Sigmoid colon (tissue), 7 donors: ENCODE measurements at regions of chr3 and their contacts with region 1.

Region 1: DNA sequence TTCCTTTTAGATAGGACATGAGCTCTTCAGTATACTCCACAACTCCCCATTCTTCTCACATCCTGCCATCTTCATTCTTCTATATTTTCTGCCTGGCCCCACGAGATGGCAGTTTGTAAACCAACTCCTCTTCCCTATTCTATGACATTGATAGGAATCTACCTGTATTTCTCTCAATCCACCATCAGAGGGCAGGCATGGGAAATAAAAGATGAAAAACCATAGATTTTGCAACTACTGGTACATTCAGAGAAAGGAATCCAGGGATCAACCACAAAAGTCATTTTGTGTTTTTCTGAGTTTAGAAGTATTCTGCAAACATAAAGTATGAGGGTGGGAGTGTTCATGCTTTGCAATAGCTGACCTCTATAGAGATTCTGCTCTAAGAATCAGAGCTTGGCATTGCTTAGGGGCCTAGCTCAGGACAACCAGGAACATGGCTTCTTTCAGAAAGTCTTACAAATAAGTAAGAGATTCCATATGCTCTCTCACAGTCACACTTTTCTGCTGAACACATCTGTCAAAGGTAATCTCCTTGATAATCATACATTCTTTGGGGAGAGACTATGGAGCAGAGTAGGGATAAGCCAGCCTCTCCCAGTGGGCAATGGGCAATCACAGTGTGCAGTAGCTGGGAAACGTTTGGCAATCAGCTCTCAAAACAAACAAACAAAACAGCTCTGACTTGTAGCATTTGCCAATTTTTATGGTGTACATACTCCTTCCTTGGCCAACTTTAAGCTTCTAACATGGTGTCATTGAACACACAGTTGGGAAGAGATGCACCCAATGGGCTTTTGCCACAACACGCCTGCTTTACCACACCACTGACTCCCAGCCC is 43.1 kb upstream of the SLC25A36 start:
- DNase-seq: no peak
- H3K4me3 ChIP-seq: no peak overlapping the region
- H3K27ac ChIP-seq: no peak overlapping the region
- H3K4me1 ChIP-seq: no peaks in the 10 kb centered on the region
- H3K27me3 ChIP-seq: no peaks in the 10 kb centered on the region
- CTCF ChIP-seq: peak in 3 of 4 experiments; percentile 37 to 51 (median 44)
- EP300 ChIP-seq: no peak
- POLR2A ChIP-seq: no peak

Region 2: GRCh38 chr3:141105828-141106628 is 207.5 kb after region 1 on chr3:
- intact Hi-C with region 1: loop called (anchors 2 kb)
- DNase-seq: peak; percentile 88
- H3K4me3 ChIP-seq: no peak overlapping the region
- H3K27ac ChIP-seq: no peak overlapping the region
- H3K4me1 ChIP-seq: no peaks in the 10 kb centered on the region
- H3K27me3 ChIP-seq: no peaks in the 10 kb centered on the region
- CTCF ChIP-seq: peak; percentile 38 to 72 (median 67)
- EP300 ChIP-seq: no peak
- POLR2A ChIP-seq: no peak

Region 3: DNA sequence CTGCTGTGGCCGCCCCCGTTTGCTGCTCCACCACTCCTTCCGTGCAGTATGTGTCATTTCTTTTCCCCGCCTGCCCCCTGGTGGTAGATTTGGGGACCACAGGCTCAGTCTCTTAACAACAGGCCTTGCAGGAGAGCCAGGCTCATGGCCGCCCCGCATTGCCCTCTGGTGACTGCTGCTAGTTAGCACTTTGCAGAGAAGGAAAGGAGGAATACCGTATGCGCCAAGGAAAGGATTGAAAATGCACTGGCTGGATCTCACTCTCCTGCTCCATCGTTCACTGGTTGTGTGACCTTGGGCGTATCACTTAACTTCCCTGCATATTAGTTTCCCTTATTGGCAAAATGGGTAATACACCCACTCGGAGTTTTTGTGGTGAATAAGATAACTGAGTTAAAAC is 293.8 kb after region 1 on chr3:
- intact Hi-C with region 1: loop called (anchors 2 kb)
- DNase-seq: peak; percentile 98
- H3K4me3 ChIP-seq: no peak overlapping the region
- H3K27ac ChIP-seq: no peak overlapping the region
- H3K4me1 ChIP-seq: peaks cover 0 to 4% (median 0%) of the 10 kb centered on the region in 4 donors
- H3K27me3 ChIP-seq: no peaks in the 10 kb centered on the region
- CTCF ChIP-seq: peak; percentile 98 to 99 (median 98)
- EP300 ChIP-seq: no peak
- POLR2A ChIP-seq: no peak